ENCODE measurements at regions of chr17 and their contacts with region 1.

Region 1: DNA sequence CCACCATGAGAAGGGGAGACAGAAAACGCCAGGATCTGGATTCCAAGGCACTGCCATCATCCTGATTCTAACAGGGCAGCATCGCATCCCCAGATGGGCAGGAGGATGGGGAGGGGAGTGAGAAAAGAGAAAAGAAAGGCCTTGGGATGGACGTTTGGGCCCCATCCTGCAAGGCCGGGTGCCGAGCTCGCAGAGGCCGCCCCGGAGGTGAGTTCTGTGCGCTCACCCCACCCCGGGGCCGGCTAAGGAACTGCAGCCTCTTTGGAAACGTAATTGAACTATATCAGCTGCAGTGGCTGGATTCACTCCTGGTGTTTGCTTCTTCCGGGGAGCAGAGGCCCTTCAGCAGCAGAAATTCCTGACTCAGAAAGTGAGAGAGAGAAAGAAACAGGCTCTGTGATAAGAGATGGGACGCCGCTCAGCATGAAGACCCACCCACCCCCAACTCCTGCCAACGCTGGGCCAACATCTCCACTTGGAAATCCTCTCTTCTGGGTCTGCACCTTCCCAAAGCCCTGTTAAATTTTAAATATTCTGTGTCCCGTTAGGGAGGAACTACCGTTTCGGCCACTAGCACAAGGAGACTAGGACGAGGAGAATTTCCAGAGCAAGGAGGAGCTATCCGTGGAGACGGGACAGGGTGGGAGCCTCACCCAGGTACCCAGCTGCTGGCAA is 8.5 kb upstream of the SSTR2 start:
- DNase-seq: peak; percentile 84

Region 2: GRCh38 chr17:72725433-72726068 is 430.8 kb before region 1 on chr17:
- CTCF ChIA-PET with region 1: interaction called, 10 read pairs
- POLR2A ChIA-PET with region 1: no interaction called
- DNase-seq: peak; percentile 72

Region 3: GRCh38 chr17:72985881-72986720 is 170.2 kb before region 1 on chr17:
- CTCF ChIA-PET with region 1: interaction called, 10 read pairs
- POLR2A ChIA-PET with region 1: interaction called, 3 read pairs
- DNase-seq: peak; percentile 89

Region 4: GRCh38 chr17:73172252-73172651 is 15.9 kb after region 1 on chr17:
- CTCF ChIA-PET with region 1: no interaction called
- POLR2A ChIA-PET with region 1: no interaction called
- DNase-seq: no peak